Naive thymus-derived CD4-positive, alpha-beta T cell (primary cell): ENCODE measurements at regions of chr14 and their contacts with region 1.

Region 1: DNA sequence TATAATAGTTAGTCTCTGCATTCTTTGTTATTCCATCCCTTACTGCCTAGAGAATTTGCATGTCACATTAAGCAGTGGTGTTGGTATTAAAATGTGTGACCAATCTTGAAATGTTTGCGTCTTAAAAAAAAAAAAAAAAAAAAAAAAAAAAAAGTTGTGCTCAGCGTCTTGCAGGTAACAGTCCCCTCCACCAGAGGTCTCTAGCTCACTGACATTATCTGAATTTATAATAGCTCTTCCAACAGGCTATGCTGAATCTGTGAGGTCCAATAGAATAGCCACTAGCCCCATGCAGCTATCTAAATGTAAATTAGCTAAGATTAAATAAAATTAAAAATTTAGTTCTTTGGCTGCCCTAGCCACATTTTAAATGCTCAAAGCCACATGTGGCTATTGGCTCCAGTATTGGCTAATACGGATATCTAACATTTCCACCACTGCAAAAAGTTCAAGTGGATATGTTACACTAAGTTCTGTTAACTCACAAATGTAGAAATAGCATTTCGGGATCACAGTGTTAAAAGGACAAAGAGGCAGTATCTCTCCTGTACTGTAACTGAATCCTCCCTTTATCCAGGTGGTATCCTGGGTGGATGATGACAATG is 28.7 kb downstream of the NKX2-8 start:
- DNase-seq: peak in 1 of 9 donors; percentile 3
- ATAC-seq: no peak
- H3K4me3 ChIP-seq: no peak overlapping the region
- H3K4me3 Mint-ChIP-seq: no peak overlapping the region
- H3K27ac ChIP-seq: no peak overlapping the region
- H3K27ac Mint-ChIP-seq: no peak overlapping the region
- H3K4me1 ChIP-seq: no peaks in the 10 kb centered on the region
- H3K4me1 Mint-ChIP-seq: peaks cover 0 to 6% (median 0%) of the 10 kb centered on the region in 7 donors
- H3K27me3 ChIP-seq: no peaks in the 10 kb centered on the region
- H3K27me3 Mint-ChIP-seq: peaks cover 4 to 23% (median 9%) of the 10 kb centered on the region in 5 donors

Region 2: DNA sequence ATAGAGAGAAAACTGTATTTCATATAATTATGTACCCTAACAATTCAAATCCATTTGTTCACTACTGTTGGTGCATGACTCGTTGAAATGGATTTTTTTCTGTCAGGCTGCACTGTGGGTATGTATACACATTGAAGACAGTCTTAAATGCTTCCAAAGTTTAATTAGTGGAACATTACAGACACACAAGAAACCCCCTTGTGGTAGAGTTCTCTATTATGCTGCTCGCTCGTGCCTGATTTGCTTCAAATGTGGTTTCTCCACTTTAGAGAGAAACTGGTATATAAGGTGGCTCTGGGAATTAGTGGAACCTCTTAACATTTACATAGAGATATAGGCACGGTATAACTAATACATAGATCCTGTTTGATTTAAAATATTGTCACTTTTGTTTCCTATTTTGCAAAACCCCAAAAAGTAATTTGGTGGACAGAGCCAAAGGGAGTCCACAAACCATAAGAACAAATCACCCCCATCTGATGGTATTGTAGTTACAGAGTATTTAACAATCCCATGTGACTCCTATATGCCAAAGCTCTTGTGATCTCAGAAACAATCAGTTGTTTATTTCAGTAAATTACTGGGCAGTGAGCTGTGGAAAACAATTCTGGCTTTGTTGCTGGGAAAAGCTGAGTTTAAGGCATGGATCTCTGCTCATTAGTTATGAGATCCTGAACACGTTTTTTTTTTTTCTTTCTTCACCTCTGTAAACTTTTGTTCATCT is 568.1 kb before region 1 on chr14:
- CTCF ChIA-PET with region 1: no interaction called
- POLR2A ChIA-PET with region 1: no interaction called
- intact Hi-C with region 1: no loop called
- DNase-seq: no peak
- ATAC-seq: no peak
- H3K4me3 ChIP-seq: no peak overlapping the region
- H3K4me3 Mint-ChIP-seq: no peak overlapping the region
- H3K27ac ChIP-seq: no peak overlapping the region
- H3K27ac Mint-ChIP-seq: no peak overlapping the region
- H3K4me1 ChIP-seq: no peaks in the 10 kb centered on the region
- H3K4me1 Mint-ChIP-seq: peaks cover 0 to 8% (median 0%) of the 10 kb centered on the region in 7 donors
- H3K27me3 ChIP-seq: no peaks in the 10 kb centered on the region
- H3K27me3 Mint-ChIP-seq: peaks cover 0 to 4% (median 2%) of the 10 kb centered on the region in 5 donors

Region 3: DNA sequence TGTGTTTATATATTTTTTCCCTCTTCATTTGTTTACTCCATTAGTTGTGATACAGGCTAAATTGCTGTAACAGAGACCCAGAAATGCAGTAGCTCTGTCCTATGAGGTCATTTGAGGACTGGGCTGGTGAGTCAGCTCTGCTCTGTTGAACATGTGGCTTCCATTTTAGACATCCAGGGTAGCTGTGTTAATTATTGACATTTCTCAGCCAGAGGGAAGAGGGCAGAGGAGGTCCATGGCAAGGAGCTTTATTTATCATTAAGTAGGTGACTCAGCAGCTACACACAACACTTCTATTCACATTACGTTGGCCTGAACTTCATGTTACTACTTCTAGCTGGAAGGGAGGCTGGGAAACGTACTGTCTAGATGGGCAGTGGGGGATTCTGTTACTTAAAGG is 462.7 kb before region 1 on chr14:
- CTCF ChIA-PET with region 1: no interaction called
- POLR2A ChIA-PET with region 1: no interaction called
- intact Hi-C with region 1: no loop called
- DNase-seq: no peak
- ATAC-seq: no peak
- H3K4me3 ChIP-seq: no peak overlapping the region
- H3K4me3 Mint-ChIP-seq: no peak overlapping the region
- H3K27ac ChIP-seq: no peak overlapping the region
- H3K27ac Mint-ChIP-seq: no peak overlapping the region
- H3K4me1 ChIP-seq: no peaks in the 10 kb centered on the region
- H3K4me1 Mint-ChIP-seq: no peaks in the 10 kb centered on the region
- H3K27me3 ChIP-seq: no peaks in the 10 kb centered on the region
- H3K27me3 Mint-ChIP-seq: peaks cover 0 to 31% (median 21%) of the 10 kb centered on the region in 5 donors

Region 4: GRCh38 chr14:36524874-36525745 is 28.6 kb before region 1 on chr14:
- CTCF ChIA-PET with region 1: no interaction called
- POLR2A ChIA-PET with region 1: no interaction called
- intact Hi-C with region 1: no loop called
- DNase-seq: no peak
- ATAC-seq: no peak
- H3K4me3 ChIP-seq: no peak overlapping the region
- H3K4me3 Mint-ChIP-seq: peak overlapping the region in 3 of 10 donors; percentile 8 to 39 (median 25)
- H3K27ac ChIP-seq: no peak overlapping the region
- H3K27ac Mint-ChIP-seq: no peak overlapping the region
- H3K4me1 ChIP-seq: no peaks in the 10 kb centered on the region
- H3K4me1 Mint-ChIP-seq: peaks cover 0 to 24% (median 22%) of the 10 kb centered on the region in 7 donors
- H3K27me3 ChIP-seq: peaks cover 6 to 8% of the 10 kb centered on the region in 2 donors
- H3K27me3 Mint-ChIP-seq: peaks cover 70 to 84% (median 77%) of the 10 kb centered on the region in 5 donors

Region 5: DNA sequence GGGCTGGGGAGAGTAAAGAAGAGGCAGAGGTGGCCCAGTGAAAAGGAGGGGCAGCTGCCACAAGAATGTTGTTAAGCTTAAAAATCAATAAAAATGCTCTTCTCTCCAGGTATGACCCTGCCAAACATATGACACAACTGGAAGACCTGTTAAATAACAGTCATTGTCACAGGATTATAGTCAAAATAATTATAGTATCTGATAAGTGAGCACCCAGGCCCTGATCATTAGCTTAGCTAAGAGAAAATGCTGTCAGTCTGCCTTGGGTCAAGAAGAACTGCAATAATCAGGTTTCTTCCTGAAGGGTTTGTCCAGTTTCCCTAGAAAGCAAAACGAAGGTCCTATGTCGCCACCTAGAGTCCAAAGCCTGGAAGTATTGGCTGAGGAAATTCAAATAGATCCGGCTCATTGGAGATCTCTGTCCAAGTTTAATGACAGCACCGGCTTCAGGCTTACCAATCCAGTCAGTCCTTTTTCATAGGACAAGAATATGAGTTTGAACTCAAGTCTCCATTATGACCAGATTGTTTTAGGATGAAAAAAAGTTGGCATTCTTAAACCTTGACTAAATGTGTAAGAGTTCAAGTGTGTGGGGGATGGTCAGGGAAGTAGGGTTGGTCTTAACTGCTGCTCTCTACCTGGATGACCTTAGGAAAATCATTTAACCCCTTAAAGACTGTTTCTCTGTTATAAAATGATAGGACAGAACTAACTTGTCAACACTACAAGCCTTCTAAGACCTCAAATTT is 51.2 kb after region 1 on chr14:
- CTCF ChIA-PET with region 1: no interaction called
- POLR2A ChIA-PET with region 1: no interaction called
- intact Hi-C with region 1: loop called in 1 of 2 experiments (anchors 1 kb)
- DNase-seq: peak in 6 of 9 donors; percentile 2 to 23 (median 5)
- ATAC-seq: no peak
- H3K4me3 ChIP-seq: no peak overlapping the region
- H3K4me3 Mint-ChIP-seq: no peak overlapping the region
- H3K27ac ChIP-seq: no peak overlapping the region
- H3K27ac Mint-ChIP-seq: no peak overlapping the region
- H3K4me1 ChIP-seq: no peaks in the 10 kb centered on the region
- H3K4me1 Mint-ChIP-seq: no peaks in the 10 kb centered on the region
- H3K27me3 ChIP-seq: no peaks in the 10 kb centered on the region
- H3K27me3 Mint-ChIP-seq: peaks cover 5 to 21% (median 14%) of the 10 kb centered on the region in 5 donors

Region 6: GRCh38 chr14:36941783-36942521 is 388.2 kb after region 1 on chr14:
- CTCF ChIA-PET with region 1: no interaction called
- POLR2A ChIA-PET with region 1: no interaction called
- intact Hi-C with region 1: loop called in 1 of 2 experiments (anchors 1 kb)
- DNase-seq: peak in 6 of 9 donors; percentile 1 to 52 (median 14)
- ATAC-seq: no peak
- H3K4me3 ChIP-seq: no peak overlapping the region
- H3K4me3 Mint-ChIP-seq: no peak overlapping the region
- H3K27ac ChIP-seq: no peak overlapping the region
- H3K27ac Mint-ChIP-seq: no peak overlapping the region
- H3K4me1 ChIP-seq: no peaks in the 10 kb centered on the region
- H3K4me1 Mint-ChIP-seq: no peaks in the 10 kb centered on the region
- H3K27me3 ChIP-seq: no peaks in the 10 kb centered on the region
- H3K27me3 Mint-ChIP-seq: peaks cover 0 to 5% (median 5%) of the 10 kb centered on the region in 5 donors